K562 (cell line): ENCODE measurements at regions of chr15 and their contacts with region 1.

Region 1: GRCh38 chr15:84648539-84648938 is 5.5 kb downstream of the WDR73 start:
- DNase-seq: no peak
- ATAC-seq: no peak
- H3K4me3 ChIP-seq: no peak overlapping the region
- H3K27ac ChIP-seq: no peak overlapping the region
- H3K4me1 ChIP-seq: peaks cover 13 to 20% of the 10 kb centered on the region in 2 experiments; a peak in 4 of 5 replicates
- H3K27me3 ChIP-seq: no peaks in the 10 kb centered on the region
- CTCF ChIP-seq: no peak
- EP300 ChIP-seq: no peak
- POLR2A ChIP-seq: no peak
- RAD21 ChIP-seq: no peak

Region 2: GRCh38 chr15:84638103-84638502 is 10.4 kb before region 1 on chr15:
- CTCF ChIA-PET with region 1: no interaction called
- POLR2A ChIA-PET with region 1: interaction called, 11 read pairs
- in situ Hi-C with region 1: no loop called
- intact Hi-C with region 1: no loop called
- DNase-seq: peak; percentile 38 to 61 (median 50)
- ATAC-seq: peak; percentile 48
- H3K4me3 ChIP-seq: no peak overlapping the region
- H3K27ac ChIP-seq: no peak overlapping the region
- H3K4me1 ChIP-seq: peaks cover 11 to 12% of the 10 kb centered on the region in 2 experiments; a peak in 4 of 5 replicates
- H3K27me3 ChIP-seq: no peaks in the 10 kb centered on the region
- CTCF ChIP-seq: peak; percentile 44 to 65 (median 50); a peak in 5 of 6 replicates
- EP300 ChIP-seq: no peak
- POLR2A ChIP-seq: no peak
- RAD21 ChIP-seq: peak; percentile 11 to 62; a peak in 2 of 4 replicates

Region 3: GRCh38 chr15:84734794-84735479 is 86.4 kb after region 1 on chr15:
- CTCF ChIA-PET with region 1: no interaction called
- POLR2A ChIA-PET with region 1: interaction called, 10 read pairs
- in situ Hi-C with region 1: no loop called
- intact Hi-C with region 1: no loop called
- DNase-seq: peak; percentile 80 to 94 (median 84)
- ATAC-seq: peak; percentile 98
- H3K4me3 ChIP-seq: peak overlapping the region; percentile 9; the same call in 1 of the 2 replicates
- H3K27ac ChIP-seq: peak overlapping the region; percentile 76
- H3K4me1 ChIP-seq: peaks cover 10 to 23% of the 10 kb centered on the region in 2 experiments
- H3K27me3 ChIP-seq: no peaks in the 10 kb centered on the region
- CTCF ChIP-seq: no peak
- EP300 ChIP-seq: peak; percentile 81
- POLR2A ChIP-seq: peak; percentile 81
- RAD21 ChIP-seq: peak in 1 of 2 experiments; percentile 32; a peak in 3 of 4 replicates

Region 4: DNA sequence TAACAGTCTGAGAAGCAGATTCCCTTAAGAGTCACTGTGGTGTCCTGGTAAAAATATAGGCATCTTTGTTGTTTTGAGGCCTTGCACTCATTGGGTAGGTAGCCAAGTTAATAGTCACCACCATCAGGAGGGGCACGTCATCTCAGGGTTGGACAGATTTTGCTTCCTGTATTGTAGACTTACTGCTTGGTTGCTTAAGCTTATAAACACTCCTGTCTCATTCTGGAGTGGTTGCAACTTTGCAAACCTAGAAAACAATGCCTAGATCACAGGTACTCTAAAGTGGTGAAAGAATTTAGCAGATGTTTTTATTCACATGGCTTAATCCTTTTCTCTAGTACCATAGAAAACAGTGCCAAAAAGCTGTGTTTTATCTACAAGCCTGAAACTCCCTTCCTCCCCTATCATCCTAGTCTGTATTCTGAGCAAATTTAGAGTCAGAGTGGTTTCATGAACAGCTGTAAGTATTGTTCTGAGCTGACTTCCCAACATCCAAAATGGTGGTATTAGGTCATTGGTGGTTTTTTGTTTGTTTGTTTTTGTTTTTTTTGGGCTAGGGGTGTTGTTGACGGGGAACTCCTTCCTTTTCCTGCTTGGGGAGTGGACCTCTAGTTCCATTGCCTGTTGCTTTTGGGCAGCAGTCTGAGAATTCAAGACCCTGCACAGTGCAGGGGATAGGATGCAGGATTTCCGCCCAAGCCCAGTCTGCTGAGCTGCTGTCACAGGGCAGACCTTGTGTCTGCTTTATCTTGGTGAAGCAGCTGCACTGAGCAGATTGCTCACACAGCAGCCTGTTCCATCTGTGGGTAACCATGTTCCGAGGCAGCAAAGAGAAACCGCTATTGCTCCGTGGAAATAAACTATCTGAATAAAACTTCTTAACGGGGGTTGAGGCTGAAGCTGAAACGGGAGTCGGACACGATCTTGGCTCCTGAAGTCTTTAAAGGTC is 933.9 kb after region 1 on chr15:
- CTCF ChIA-PET with region 1: no interaction called
- POLR2A ChIA-PET with region 1: no interaction called
- in situ Hi-C with region 1: no loop called
- intact Hi-C with region 1: no loop called
- DNase-seq: peak; percentile 9 to 53 (median 28)
- ATAC-seq: peak; percentile 80
- H3K4me3 ChIP-seq: no peak overlapping the region
- H3K27ac ChIP-seq: no peak overlapping the region
- H3K4me1 ChIP-seq: no peaks in the 10 kb centered on the region
- H3K27me3 ChIP-seq: no peaks in the 10 kb centered on the region
- CTCF ChIP-seq: no peak
- EP300 ChIP-seq: no peak
- POLR2A ChIP-seq: no peak
- RAD21 ChIP-seq: no peak